Caco-2 (cell line): ENCODE measurements at regions of chr1 and their contacts with region 1.

Region 1: DNA sequence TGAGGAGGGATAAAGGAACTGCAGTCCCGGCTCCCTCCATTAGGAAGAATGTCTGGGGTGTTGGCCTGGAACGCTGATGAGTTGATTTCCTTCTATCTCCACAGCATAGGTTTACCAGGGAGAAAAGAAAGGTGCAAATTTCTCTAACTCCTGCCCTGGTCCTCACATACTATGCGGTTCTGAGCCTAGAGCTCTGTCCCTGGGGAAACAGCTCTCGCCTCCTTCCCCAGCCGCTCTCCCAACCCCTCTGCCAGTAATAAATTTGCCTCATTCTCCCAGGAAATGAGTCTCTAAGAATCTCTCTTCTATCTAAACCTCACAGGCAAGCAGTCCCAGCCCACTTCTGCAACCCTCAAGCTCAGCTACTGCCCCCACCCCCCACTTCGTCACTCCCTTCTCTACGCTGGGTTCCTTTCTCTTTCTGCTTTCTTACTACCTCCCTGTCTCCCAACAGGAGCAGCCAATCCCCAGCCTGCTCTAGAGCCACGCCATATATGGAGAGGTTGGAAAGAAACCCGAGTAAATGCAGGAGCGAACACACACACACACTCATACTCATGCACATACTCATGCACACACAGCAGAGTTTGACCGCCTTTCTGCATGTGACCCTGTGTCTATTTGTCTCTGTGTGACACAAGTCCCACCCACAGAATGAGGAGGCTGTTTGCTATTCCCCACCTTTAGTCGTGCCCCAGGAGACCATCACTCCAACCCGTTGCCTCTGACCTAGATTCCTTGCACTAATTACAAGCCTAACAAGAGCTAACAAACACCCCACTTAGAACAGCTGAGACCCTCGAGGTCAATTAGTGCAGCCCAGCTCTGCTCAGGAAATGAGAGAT is 13.4 kb downstream of the PLEKHO1 start:
- DNase-seq: peak; percentile 79 to 85
- H3K4me3 ChIP-seq: 0 out of 2 replicates have a peak overlapping the region, but pooled peaks have one; percentile 2
- H3K4me3 Mint-ChIP-seq: peak overlapping the region; percentile 62
- H3K27ac Mint-ChIP-seq: peak overlapping the region; percentile 87
- H3K4me1 ChIP-seq: peaks cover 29% of the 10 kb centered on the region
- H3K4me1 Mint-ChIP-seq: peaks cover 27% of the 10 kb centered on the region
- H3K27me3 ChIP-seq: no peaks in the 10 kb centered on the region
- H3K27me3 Mint-ChIP-seq: no peaks in the 10 kb centered on the region
- CTCF ChIP-seq: no peak

Region 2: GRCh38 chr1:149962123-149962548 is 200.9 kb before region 1 on chr1:
- CTCF ChIA-PET with region 1: no interaction called
- POLR2A ChIA-PET with region 1: no interaction called
- intact Hi-C with region 1: loop called (anchors 1 kb)
- DNase-seq: peak; percentile 59 to 69
- H3K4me3 ChIP-seq: no peak overlapping the region
- H3K4me3 Mint-ChIP-seq: no peak overlapping the region
- H3K27ac Mint-ChIP-seq: no peak overlapping the region
- H3K4me1 ChIP-seq: no peaks in the 10 kb centered on the region
- H3K4me1 Mint-ChIP-seq: no peaks in the 10 kb centered on the region
- H3K27me3 ChIP-seq: no peaks in the 10 kb centered on the region
- H3K27me3 Mint-ChIP-seq: no peaks in the 10 kb centered on the region
- CTCF ChIP-seq: peak; percentile 69 to 84

Region 3: DNA sequence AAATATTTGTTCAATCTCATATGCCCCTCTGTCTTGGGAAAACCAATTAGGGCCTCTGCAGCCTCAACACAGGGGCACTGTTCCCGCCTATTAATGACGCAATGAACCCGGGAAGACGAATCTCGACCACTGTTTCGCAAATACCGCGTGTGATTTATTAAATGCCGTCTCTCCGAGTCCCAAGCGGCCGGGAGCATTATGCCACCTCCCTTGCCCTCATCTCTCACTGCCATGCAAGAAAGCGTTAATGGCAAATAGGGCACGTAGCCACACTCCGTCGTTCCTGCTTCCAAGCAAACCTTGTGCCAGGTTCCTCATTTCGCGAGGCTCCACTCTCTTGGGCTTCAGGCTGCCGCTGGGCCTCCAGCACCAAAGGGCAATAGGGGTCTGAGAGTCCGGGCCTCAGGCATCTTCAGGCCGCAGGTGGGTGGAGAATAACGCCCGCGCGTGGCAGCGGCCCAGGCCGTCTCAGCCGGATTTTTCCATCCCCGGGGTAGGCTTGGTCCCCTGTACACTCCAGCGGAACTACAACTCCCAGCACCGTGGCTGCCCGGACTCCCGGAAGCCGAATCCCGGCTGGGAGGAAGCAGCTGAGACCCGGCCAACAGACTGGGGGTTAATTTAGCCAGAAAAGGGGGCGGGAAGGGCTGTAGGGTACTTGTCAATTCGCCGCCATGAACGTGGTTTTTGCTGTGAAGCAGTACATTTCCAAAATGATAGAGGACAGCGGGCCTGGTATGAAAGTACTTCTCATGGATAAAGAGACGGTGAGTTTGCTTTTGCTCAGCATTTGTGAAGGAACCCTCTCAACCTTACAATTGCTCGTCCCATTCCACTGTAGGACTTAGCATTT is 95.7 kb before region 1 on chr1 and contains the start of gene VPS45:
- CTCF ChIA-PET with region 1: no interaction called
- POLR2A ChIA-PET with region 1: interaction called, 3 read pairs
- intact Hi-C with region 1: loop called (anchors 2 kb)
- DNase-seq: peak; percentile 91
- H3K4me3 ChIP-seq: peak within 1 kb of the TSS; percentile 88
- H3K4me3 Mint-ChIP-seq: peak within 1 kb of the TSS; percentile 89
- H3K27ac Mint-ChIP-seq: peak within 1 kb of the TSS; percentile 87
- H3K4me1 ChIP-seq: peaks cover 9% of the 10 kb centered on the region; the same call in 1 of the 2 replicates
- H3K4me1 Mint-ChIP-seq: peaks cover 7% of the 10 kb centered on the region
- H3K27me3 ChIP-seq: no peaks in the 10 kb centered on the region
- H3K27me3 Mint-ChIP-seq: no peaks in the 10 kb centered on the region
- CTCF ChIP-seq: no peak
- total RNA-seq, gene VPS45: 19.8 and 25.0 TPM in 2 replicates